ENCODE measurements at regions of chr1 and their contacts with region 1.

Region 1: DNA sequence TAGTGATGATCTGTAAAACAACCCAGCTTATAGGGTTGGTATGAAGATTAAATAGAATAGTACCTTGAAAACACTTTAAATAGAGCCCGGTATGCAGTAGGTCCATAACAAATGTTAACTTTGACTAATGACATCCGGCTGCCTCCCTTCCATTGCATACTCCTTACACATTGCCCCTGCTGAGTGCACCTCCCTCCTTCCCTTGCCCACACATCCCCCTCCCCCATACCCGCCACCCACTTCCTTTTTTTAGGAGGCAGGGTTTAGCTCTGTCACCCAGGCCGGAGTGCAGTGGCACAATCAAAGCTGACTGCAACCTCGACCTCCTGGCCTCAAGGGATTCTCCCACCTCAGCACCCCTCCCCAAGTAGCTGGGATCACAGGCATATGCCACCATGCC is 24.4 kb upstream of the ZC3H12A start:
- DNase-seq: peak; percentile 48
- ATAC-seq: no peak
- H3K4me3 Mint-ChIP-seq: no peak overlapping the region
- H3K27ac Mint-ChIP-seq: peak overlapping the region; percentile 15
- H3K4me1 Mint-ChIP-seq: peaks cover 13% of the 10 kb centered on the region
- H3K27me3 Mint-ChIP-seq: peaks cover 14% of the 10 kb centered on the region

Region 2: GRCh38 chr1:37288900-37289299 is 161.0 kb before region 1 on chr1:
- CTCF ChIA-PET with region 1: no interaction called
- DNase-seq: no peak
- ATAC-seq: no peak
- H3K4me3 Mint-ChIP-seq: no peak overlapping the region
- H3K27ac Mint-ChIP-seq: no peak overlapping the region
- H3K4me1 Mint-ChIP-seq: no peaks in the 10 kb centered on the region
- H3K27me3 Mint-ChIP-seq: no peaks in the 10 kb centered on the region

Region 3: GRCh38 chr1:37465593-37466517 is 15.9 kb after region 1 on chr1:
- CTCF ChIA-PET with region 1: interaction called, 96 read pairs
- DNase-seq: no peak
- ATAC-seq: no peak
- H3K4me3 Mint-ChIP-seq: no peak overlapping the region
- H3K27ac Mint-ChIP-seq: no peak overlapping the region
- H3K4me1 Mint-ChIP-seq: peaks cover 10% of the 10 kb centered on the region
- H3K27me3 Mint-ChIP-seq: no peaks in the 10 kb centered on the region